Activated naive CD4-positive, alpha-beta T cell treated with anti-CD3 and anti-CD28 coated beads, Interleukin-2, amount 10 ng/mL, durations not matched to agents 7 days and 5 days (primary cell): ENCODE measurements at regions of chr6 and their contacts with region 1.

Region 1: GRCh38 chr6:17714879-17715851 is 8.4 kb upstream of the NUP153 start:
- DNase-seq: peak; percentile 32
- H3K4me3 Mint-ChIP-seq: no peak overlapping the region
- H3K27ac Mint-ChIP-seq: peak overlapping the region; percentile 80
- H3K4me1 Mint-ChIP-seq: peaks cover 15% of the 10 kb centered on the region
- H3K27me3 Mint-ChIP-seq: peaks cover 9% of the 10 kb centered on the region

Region 2: DNA sequence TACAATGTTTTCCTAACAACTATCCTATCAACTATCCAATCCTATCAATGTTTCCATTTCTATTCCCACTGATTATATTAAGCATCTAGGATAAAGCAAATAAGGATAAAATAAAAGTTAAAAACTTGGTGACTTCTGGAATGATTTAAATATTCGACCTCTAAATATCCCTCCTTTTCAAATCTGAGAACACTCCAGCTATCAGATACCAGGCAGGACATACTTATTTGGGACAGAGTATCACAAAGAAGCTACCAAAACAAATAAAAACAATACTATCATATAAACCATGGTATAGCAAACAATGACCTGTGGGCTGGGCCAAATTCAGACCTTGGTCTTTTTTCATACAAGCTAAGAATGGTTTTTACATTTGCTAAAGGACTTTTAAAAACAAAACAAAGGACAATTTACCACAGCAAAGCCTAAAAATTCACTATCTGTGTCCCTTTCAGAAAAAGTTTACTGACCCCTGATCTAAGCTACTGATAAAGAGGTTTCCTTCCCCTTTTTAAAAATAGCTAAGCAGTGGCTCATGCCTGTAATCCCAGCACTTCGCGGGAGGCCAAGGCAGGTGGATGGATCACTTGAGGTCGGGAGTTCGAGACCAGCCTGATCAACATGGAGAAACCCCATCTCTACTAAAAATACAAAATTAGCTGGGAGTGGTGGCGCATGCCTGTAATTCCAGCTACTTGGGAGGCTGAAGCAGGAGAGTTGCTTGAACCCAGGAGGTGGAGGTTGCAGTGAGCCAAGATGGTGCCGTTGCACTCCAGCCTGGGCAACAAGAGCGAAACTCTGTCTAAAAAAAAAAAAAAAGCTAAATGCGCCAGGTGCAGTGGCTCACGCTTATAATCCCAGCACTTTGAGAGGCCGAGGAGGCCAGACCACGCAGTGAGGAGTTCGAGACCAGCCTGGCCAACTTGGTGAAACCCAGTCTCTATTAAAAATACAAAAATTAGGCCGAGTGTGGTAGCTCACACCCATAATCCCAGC is 14.4 kb before region 1 on chr6:
- CTCF ChIA-PET with region 1: interaction called, 17 read pairs
- DNase-seq: no peak
- H3K4me3 Mint-ChIP-seq: no peak overlapping the region
- H3K27ac Mint-ChIP-seq: peak overlapping the region; percentile 37
- H3K4me1 Mint-ChIP-seq: peaks cover 52% of the 10 kb centered on the region
- H3K27me3 Mint-ChIP-seq: no peaks in the 10 kb centered on the region

Region 3: GRCh38 chr6:17845598-17845997 is 130.4 kb after region 1 on chr6:
- CTCF ChIA-PET with region 1: no interaction called
- DNase-seq: no peak
- H3K4me3 Mint-ChIP-seq: no peak overlapping the region
- H3K27ac Mint-ChIP-seq: no peak overlapping the region
- H3K4me1 Mint-ChIP-seq: peaks cover 4% of the 10 kb centered on the region
- H3K27me3 Mint-ChIP-seq: peaks cover 4% of the 10 kb centered on the region